ENCODE measurements at regions of chr5 and their contacts with region 1.

Region 1: GRCh38 chr5:81851481-81852178 is 100.7 kb upstream of the SSBP2 start:
- DNase-seq: peak; percentile 81 to 95 (median 90)
- ATAC-seq: peak; percentile 91
- H3K4me3 ChIP-seq: peak overlapping the region; percentile 63 to 68
- H3K4me3 Mint-ChIP-seq: peak overlapping the region; percentile 94
- H3K27ac ChIP-seq: peak overlapping the region; percentile 56 to 58
- H3K27ac Mint-ChIP-seq: peak overlapping the region; percentile 97
- H3K4me1 ChIP-seq: peaks cover 26% of the 10 kb centered on the region
- H3K4me1 Mint-ChIP-seq: peaks cover 51% of the 10 kb centered on the region
- H3K27me3 ChIP-seq: no peaks in the 10 kb centered on the region
- H3K27me3 Mint-ChIP-seq: no peaks in the 10 kb centered on the region
- CTCF ChIP-seq: no peak

Region 2: DNA sequence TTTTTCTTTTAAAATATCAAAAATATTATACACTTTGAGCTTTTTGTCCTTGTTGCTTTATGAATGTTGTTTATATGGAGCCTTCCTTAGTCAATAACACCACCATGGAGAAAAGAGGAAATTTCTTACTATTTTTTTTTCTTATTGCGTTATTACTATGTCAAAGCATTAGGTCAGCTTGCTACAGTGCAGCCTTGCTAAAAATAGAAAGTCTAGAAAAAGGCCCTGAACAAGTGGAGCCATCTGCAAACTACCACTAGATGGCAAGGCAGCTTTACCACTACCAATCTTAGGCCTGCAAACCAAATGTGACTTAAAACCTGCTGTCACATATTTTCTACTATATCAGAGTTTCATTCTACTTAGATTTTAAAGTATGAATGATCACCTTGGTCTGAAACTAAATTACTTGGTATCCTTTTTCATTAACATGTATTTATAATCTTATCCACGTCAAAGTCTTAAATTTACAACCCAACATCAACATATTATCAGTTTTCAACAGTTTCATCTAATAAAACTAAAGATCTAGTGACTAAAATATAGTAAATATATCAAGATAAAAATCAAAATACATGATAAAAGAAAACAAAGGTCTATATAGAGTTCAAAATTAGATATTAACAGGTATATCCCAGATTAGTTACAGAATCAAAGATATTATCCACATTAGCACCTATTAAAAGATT is 344.6 kb before region 1 on chr5:
- CTCF ChIA-PET with region 1: no interaction called
- POLR2A ChIA-PET with region 1: no interaction called
- intact Hi-C with region 1: loop called (anchors 5 kb)
- DNase-seq: peak in 7 of 9 experiments; percentile 2 to 72 (median 28)
- ATAC-seq: peak; percentile 65
- H3K4me3 ChIP-seq: no peak overlapping the region
- H3K4me3 Mint-ChIP-seq: no peak overlapping the region
- H3K27ac ChIP-seq: no peak overlapping the region
- H3K27ac Mint-ChIP-seq: no peak overlapping the region
- H3K4me1 ChIP-seq: no peaks in the 10 kb centered on the region
- H3K4me1 Mint-ChIP-seq: no peaks in the 10 kb centered on the region
- H3K27me3 ChIP-seq: no peaks in the 10 kb centered on the region
- H3K27me3 Mint-ChIP-seq: no peaks in the 10 kb centered on the region
- CTCF ChIP-seq: peak; percentile 66

Region 3: GRCh38 chr5:81819556-81820317 is 31.9 kb before region 1 on chr5:
- CTCF ChIA-PET with region 1: interaction called, 5 read pairs
- POLR2A ChIA-PET with region 1: interaction called, 4 read pairs
- intact Hi-C with region 1: loop called in 1 of 2 experiments (anchors 5 kb)
- DNase-seq: no peak
- ATAC-seq: no peak
- H3K4me3 ChIP-seq: no peak overlapping the region
- H3K4me3 Mint-ChIP-seq: no peak overlapping the region
- H3K27ac ChIP-seq: no peak overlapping the region
- H3K27ac Mint-ChIP-seq: peak overlapping the region; percentile 3
- H3K4me1 ChIP-seq: peaks cover 22% of the 10 kb centered on the region
- H3K4me1 Mint-ChIP-seq: peaks cover 42% of the 10 kb centered on the region
- H3K27me3 ChIP-seq: no peaks in the 10 kb centered on the region
- H3K27me3 Mint-ChIP-seq: no peaks in the 10 kb centered on the region
- CTCF ChIP-seq: no peak

Region 4: GRCh38 chr5:81879936-81880335 is 28.3 kb after region 1 on chr5:
- CTCF ChIA-PET with region 1: no interaction called
- POLR2A ChIA-PET with region 1: no interaction called
- intact Hi-C with region 1: loop called in 1 of 2 experiments (anchors 1 kb)
- DNase-seq: no peak
- ATAC-seq: no peak
- H3K4me3 ChIP-seq: no peak overlapping the region
- H3K4me3 Mint-ChIP-seq: no peak overlapping the region
- H3K27ac ChIP-seq: no peak overlapping the region
- H3K27ac Mint-ChIP-seq: no peak overlapping the region
- H3K4me1 ChIP-seq: no peaks in the 10 kb centered on the region
- H3K4me1 Mint-ChIP-seq: no peaks in the 10 kb centered on the region
- H3K27me3 ChIP-seq: no peaks in the 10 kb centered on the region
- H3K27me3 Mint-ChIP-seq: no peaks in the 10 kb centered on the region
- CTCF ChIP-seq: no peak

Region 5: DNA sequence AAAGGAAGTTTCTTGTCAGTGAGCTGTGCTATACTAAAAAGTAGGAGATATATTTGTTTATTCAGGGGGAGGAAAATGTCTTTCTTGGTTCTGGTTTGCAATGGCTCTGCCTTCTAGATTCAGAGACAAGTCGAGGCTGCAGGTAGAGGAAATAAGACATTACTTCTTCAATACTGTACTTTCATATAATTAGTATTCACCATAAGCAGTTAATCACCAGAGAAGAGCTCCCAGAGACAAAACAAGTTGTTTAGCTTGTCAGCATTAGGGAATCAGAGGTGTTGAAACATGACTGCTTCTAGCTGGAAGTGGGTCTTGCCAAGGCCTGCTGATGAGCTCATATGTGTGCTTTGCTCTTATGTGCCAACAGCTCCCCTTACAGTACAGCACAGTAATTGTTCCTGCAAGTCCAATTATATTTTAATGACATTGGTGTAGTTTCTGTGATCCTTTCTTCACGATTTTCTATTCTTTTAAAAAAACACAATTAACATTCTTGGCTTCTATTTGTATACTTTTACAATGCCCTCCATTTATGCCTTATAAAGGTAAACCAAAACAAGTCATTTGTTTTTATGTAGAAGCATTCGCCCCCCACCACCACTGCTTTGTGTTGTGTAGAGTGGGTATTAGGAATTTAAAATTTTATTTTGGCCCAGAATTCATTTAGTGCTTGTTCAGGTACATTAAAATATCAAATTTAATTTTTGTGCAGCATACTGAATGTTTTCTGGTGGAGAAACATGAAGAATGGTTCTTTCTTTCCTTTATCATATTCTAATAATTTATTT is 314.3 kb after region 1 on chr5:
- CTCF ChIA-PET with region 1: interaction called, 4 read pairs
- POLR2A ChIA-PET with region 1: no interaction called
- intact Hi-C with region 1: loop called in 1 of 2 experiments (anchors 5 kb)
- DNase-seq: peak in 7 of 9 experiments; percentile 1 to 76 (median 30)
- ATAC-seq: peak; percentile 99
- H3K4me3 ChIP-seq: no peak overlapping the region
- H3K4me3 Mint-ChIP-seq: no peak overlapping the region
- H3K27ac ChIP-seq: no peak overlapping the region
- H3K27ac Mint-ChIP-seq: no peak overlapping the region
- H3K4me1 ChIP-seq: no peaks in the 10 kb centered on the region
- H3K4me1 Mint-ChIP-seq: no peaks in the 10 kb centered on the region
- H3K27me3 ChIP-seq: no peaks in the 10 kb centered on the region
- H3K27me3 Mint-ChIP-seq: no peaks in the 10 kb centered on the region
- CTCF ChIP-seq: peak; percentile 78

Region 6: DNA sequence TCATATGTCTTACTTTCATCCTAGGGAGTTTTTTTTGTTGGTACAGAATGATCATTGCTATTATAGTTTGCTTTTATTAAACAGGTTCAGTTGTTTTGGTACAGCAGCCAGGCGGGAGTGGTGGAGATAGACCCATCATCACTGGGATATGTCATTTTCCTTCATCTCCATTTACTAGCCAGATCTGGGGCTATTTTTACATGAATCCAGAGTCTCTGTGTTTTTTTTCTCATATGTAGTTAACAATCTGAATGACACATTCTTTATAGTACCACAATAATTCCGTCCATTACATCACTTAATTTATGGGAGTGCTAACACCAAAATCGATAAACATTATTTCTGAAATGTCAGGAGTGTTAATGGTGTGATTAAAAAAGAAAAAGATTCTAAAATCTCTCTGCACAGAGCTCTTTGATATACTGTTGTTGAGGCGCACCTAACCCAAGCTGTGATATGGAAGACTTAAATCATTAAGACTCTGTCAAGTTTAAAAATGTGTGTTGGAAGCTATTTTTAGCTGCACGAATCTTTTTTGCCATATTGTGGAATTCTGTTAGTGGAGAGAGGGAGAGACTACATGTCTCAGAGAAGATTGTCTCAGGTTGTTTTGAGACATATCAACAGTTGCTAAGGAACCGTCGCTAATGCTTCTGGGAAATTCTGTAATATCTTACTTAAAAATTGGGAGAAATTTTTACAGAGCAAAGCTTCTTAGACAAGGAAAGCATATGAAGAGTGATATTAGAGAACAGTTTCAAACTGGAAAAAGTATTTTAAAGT is 366.9 kb after region 1 on chr5:
- CTCF ChIA-PET with region 1: no interaction called
- POLR2A ChIA-PET with region 1: no interaction called
- intact Hi-C with region 1: no loop called
- DNase-seq: no peak
- ATAC-seq: no peak
- H3K4me3 ChIP-seq: no peak overlapping the region
- H3K4me3 Mint-ChIP-seq: no peak overlapping the region
- H3K27ac ChIP-seq: no peak overlapping the region
- H3K27ac Mint-ChIP-seq: no peak overlapping the region
- H3K4me1 ChIP-seq: no peaks in the 10 kb centered on the region
- H3K4me1 Mint-ChIP-seq: peaks cover 4% of the 10 kb centered on the region
- H3K27me3 ChIP-seq: no peaks in the 10 kb centered on the region
- H3K27me3 Mint-ChIP-seq: no peaks in the 10 kb centered on the region
- CTCF ChIP-seq: no peak

Region 7: DNA sequence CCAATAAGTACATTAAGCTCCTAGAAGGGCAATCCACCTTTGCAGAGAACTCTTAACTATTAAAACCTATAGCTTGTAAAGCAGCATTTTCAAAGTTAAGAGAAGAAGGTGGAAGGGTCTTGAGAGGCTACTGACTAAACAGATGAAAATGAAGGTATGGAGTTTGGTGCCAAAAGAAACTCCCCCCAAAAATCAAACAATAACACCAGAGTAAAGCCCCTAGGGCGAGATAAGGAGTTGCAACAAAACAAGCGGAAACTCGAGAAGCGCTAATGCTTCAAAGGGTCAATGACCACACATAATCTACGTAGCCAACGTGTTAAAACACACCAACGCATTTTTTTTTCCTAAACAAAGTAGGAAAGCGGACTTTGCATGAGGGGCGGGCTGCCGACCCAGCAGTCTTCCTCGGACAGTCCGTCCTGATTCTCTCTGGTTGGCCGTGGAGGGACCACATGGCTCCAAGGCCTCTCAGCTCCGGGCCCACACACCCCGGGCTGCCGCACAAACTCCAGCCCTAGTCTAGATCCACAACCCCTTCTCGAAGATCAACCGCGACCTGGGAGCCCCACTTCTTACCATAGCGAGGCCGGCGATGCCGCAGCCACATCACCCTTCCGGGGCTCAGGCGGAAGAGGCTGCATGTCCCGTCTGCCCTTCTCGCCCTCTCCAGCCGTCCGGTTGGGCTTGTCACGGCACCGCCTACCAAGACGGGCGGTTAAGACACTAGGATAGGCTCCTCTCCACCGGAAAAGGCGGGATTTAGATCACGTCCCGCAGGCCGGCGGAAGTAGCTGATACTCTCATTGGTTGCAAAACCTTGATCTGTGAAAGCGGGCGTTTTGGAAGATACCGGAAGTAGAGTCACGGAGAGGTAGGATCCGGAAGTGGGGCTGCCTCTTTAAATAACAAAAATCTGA is 1225.4 kb after region 1 on chr5 and contains the starts of genes TMEM167A and XRCC4:
- CTCF ChIA-PET with region 1: no interaction called
- POLR2A ChIA-PET with region 1: no interaction called
- intact Hi-C with region 1: loop called in 1 of 2 experiments (anchors 10 kb)
- DNase-seq: peak; percentile 84 to 98 (median 92)
- ATAC-seq: peak; percentile 98
- H3K4me3 ChIP-seq: peak within 1 kb of the TSS; percentile 81 to 93
- H3K4me3 Mint-ChIP-seq: peak within 1 kb of the TSS; percentile 99
- H3K27ac ChIP-seq: peak within 1 kb of the TSS; percentile 77 to 96
- H3K27ac Mint-ChIP-seq: peak within 1 kb of the TSS; percentile 99
- H3K4me1 ChIP-seq: peaks cover 28% of the 10 kb centered on the region
- H3K4me1 Mint-ChIP-seq: peaks cover 59% of the 10 kb centered on the region
- H3K27me3 ChIP-seq: no peaks in the 10 kb centered on the region
- H3K27me3 Mint-ChIP-seq: no peaks in the 10 kb centered on the region
- CTCF ChIP-seq: no peak
- total RNA-seq, gene TMEM167A: 51.6 to 59.0 TPM
- total RNA-seq, gene XRCC4: 1.1 to 1.3 TPM